ENCODE measurements at regions of chr5 and their contacts with region 1.

Region 1: GRCh38 chr5:6632917-6633468 is at the starts of genes NSUN2 and SRD5A1:
- DNase-seq: peak; percentile 92
- H3K4me3 Mint-ChIP-seq: peak within 1 kb of the TSS; percentile 97
- H3K27ac Mint-ChIP-seq: peak within 1 kb of the TSS; percentile 95
- H3K4me1 Mint-ChIP-seq: peaks cover 40% of the 10 kb centered on the region
- H3K27me3 Mint-ChIP-seq: no peaks in the 10 kb centered on the region
- total RNA-seq, gene NSUN2: 78.5 to 86.7 TPM
- total RNA-seq, gene SRD5A1: 9.5 to 11.0 TPM

Region 2: DNA sequence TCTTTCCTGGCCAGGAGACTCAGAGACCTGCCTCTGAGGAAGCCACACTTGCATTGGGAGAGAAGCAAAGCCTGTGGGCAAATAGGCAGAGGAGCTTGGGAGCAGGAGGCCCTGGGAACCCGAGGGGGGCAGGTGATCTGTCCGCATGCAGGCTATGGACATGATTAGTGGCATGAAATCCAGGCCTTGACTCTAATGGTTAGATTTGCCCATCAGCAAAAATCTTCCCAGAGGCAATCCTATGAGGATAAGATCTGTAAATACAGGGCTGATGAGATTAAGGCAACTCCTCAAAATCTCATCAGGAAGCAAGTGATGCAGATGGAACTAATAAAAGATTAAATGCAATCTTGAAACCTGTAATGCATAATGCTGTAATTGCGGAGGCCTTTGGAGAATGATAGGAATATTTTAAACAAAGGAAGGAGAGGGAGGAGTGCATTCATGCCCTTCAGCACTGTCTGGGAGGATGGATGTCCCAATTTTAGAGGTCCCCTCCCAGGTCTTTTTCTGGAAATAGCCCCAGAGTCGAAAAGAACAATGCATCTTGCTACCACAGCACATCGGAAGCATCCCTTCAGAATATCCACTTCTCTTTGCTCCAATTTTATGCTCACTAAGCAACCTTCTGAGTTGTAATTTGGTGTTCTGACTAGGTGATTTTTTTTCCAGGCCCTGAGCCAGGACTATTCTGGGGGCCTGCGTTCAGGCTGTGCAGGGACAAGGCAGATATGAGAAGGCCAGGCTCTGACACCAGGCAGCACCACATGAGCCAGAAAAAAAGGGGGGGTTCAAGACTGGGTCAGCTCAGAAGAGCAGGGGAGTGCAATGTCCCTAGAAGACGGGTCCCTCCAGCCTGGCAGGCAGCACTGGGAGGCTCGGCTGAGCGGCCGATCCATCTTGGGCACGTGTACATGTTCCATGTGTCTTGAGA is 321.2 kb before region 1 on chr5:
- CTCF ChIA-PET with region 1: no interaction called
- POLR2A ChIA-PET with region 1: no interaction called
- intact Hi-C with region 1: no loop called
- DNase-seq: no peak
- H3K4me3 Mint-ChIP-seq: no peak overlapping the region
- H3K27ac Mint-ChIP-seq: no peak overlapping the region
- H3K4me1 Mint-ChIP-seq: no peaks in the 10 kb centered on the region
- H3K27me3 Mint-ChIP-seq: no peaks in the 10 kb centered on the region

Region 3: DNA sequence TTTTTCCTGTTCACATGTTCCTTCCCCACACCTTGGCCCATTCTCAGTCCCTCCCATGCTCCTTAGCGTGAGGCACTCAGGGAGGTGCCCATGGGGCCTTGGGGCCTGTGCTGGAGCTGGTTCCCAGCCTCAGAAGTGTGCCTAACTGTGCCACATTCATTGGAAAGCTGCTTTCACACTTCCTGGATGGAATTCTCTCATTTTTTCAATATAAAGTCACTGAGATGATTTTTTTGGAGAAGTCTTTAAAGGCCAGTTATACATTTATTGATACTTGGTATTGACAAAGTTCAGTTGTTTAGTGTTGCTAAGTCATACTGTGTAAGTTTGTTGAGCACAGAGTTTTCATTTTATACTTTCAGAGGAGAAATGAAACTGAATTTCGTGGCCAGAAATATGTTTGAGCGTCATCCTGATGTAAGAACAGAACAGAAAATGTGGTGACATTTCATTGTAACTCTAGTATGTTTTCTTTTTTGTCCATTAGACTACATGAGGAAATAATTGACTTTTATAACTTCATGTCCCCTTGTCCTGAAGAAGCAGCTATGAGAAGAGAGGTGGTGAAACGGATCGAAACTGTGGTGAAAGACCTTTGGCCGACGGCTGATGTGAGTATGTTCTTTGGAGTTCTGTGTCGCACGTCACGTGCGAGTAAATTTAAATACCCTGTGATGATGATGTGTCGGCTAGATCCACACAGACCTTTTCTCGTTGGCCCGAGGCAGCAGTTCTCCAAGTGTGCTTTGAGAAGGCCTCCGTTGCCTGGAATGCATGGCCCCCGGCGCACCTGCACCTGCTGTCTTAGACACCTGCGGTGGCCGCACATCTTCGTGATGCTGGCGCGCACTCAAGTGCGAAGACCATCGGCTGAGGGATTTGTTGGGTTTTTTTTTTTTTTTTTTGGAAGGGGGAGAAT is 104.3 kb after region 1 on chr5:
- CTCF ChIA-PET with region 1: no interaction called
- POLR2A ChIA-PET with region 1: no interaction called
- intact Hi-C with region 1: loop called (anchors 2 kb)
- DNase-seq: peak; percentile 32
- H3K4me3 Mint-ChIP-seq: peak overlapping the region; percentile 10
- H3K27ac Mint-ChIP-seq: peak overlapping the region; percentile 84
- H3K4me1 Mint-ChIP-seq: peaks cover 54% of the 10 kb centered on the region
- H3K27me3 Mint-ChIP-seq: no peaks in the 10 kb centered on the region

Region 4: DNA sequence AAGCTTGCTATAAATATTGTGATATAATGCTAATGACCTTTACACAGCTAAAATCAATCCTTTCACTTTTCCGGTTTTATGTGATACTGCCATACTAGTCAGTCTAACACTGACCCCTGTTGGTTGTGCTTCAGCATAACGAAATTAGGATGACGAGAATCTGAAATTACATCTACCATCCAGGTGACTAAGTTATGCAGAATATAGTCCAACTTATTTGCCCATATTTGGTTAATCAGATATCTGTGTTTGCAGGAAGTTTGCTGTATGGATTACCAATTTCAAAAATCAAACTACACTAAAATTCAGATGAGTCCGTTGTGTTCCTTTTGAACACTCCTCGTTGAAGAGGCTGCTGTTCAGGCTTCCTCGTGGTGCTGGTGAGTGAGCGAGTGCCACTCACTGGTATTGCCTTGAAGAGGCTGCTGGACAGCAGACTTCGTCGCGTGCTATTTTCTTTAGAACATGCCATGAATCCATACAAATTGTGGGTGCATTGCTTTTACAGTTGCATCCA is 112.8 kb after region 1 on chr5:
- CTCF ChIA-PET with region 1: interaction called, 20 read pairs
- POLR2A ChIA-PET with region 1: no interaction called
- intact Hi-C with region 1: loop called (anchors 1 kb)
- DNase-seq: no peak
- H3K4me3 Mint-ChIP-seq: no peak overlapping the region
- H3K27ac Mint-ChIP-seq: no peak overlapping the region
- H3K4me1 Mint-ChIP-seq: peaks cover 4% of the 10 kb centered on the region
- H3K27me3 Mint-ChIP-seq: no peaks in the 10 kb centered on the region

Measured in activated CD4-positive, alpha-beta memory T cell treated with anti-CD3 and anti-CD28 coated beads for 36 hours (primary cell).